MCF 10A (cell line): ENCODE measurements at regions of chr5 and their contacts with region 1.

Region 1: DNA sequence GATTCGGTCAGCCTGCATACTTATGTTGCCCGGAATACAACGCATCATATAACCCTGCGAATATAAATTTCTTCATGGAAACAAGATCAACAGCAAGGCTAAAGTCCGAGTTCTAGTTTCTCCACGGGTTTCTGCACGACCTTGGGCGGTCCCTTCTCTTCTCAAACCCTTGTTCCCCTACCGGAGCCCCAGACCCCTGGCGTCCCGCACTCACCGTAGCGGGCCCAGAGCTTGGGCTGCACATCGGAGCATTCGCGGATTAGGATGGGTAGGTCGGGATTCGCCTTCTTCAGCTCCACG is 438 bp downstream of the NDUFA2 start:
- DNase-seq: no peak
- H3K4me3 Mint-ChIP-seq: peak overlapping the region; percentile 86
- H3K27ac Mint-ChIP-seq: peak overlapping the region; percentile 93
- H3K4me1 Mint-ChIP-seq: peaks cover 18% of the 10 kb centered on the region
- H3K27me3 Mint-ChIP-seq: no peaks in the 10 kb centered on the region
- CTCF ChIP-seq: no peak

Region 2: GRCh38 chr5:140401362-140402257 is 245.4 kb before region 1 on chr5 and contains the start of gene ANKHD1:
- CTCF ChIA-PET with region 1: no interaction called
- POLR2A ChIA-PET with region 1: interaction called, 46 read pairs
- intact Hi-C with region 1: no loop called
- DNase-seq: peak; percentile 100
- H3K4me3 Mint-ChIP-seq: no peak within 1 kb of the TSS
- H3K27ac Mint-ChIP-seq: no peak within 1 kb of the TSS
- H3K4me1 Mint-ChIP-seq: peaks cover 19% of the 10 kb centered on the region
- H3K27me3 Mint-ChIP-seq: no peaks in the 10 kb centered on the region
- CTCF ChIP-seq: no peak
- total RNA-seq, gene ANKHD1: 142 and 146 TPM in 2 replicates

Region 3: GRCh38 chr5:140564196-140565023 is 82.6 kb before region 1 on chr5 and contains the starts of genes APBB3 and SLC35A4:
- CTCF ChIA-PET with region 1: interaction called, 4 read pairs
- POLR2A ChIA-PET with region 1: interaction called, 169 read pairs
- intact Hi-C with region 1: no loop called
- DNase-seq: peak; percentile 99
- H3K4me3 Mint-ChIP-seq: peak within 1 kb of the TSS; percentile 84
- H3K27ac Mint-ChIP-seq: peak within 1 kb of the TSS; percentile 95
- H3K4me1 Mint-ChIP-seq: peaks cover 22% of the 10 kb centered on the region
- H3K27me3 Mint-ChIP-seq: no peaks in the 10 kb centered on the region
- CTCF ChIP-seq: no peak
- total RNA-seq, gene APBB3: 22.7 and 28.1 TPM in 2 replicates
- total RNA-seq, gene SLC35A4: 84.0 and 119 TPM in 2 replicates

Region 4: GRCh38 chr5:140609126-140609525 is 37.9 kb before region 1 on chr5:
- CTCF ChIA-PET with region 1: no interaction called
- POLR2A ChIA-PET with region 1: interaction called, 13 read pairs
- intact Hi-C with region 1: no loop called
- DNase-seq: peak; percentile 77
- H3K4me3 Mint-ChIP-seq: no peak overlapping the region
- H3K27ac Mint-ChIP-seq: peak overlapping the region; percentile 32
- H3K4me1 Mint-ChIP-seq: peaks cover 29% of the 10 kb centered on the region
- H3K27me3 Mint-ChIP-seq: no peaks in the 10 kb centered on the region
- CTCF ChIP-seq: no peak

Region 5: GRCh38 chr5:140664359-140665119 is 17.5 kb after region 1 on chr5 and contains the start of gene WDR55:
- CTCF ChIA-PET with region 1: interaction called, 3 read pairs
- POLR2A ChIA-PET with region 1: interaction called, 164 read pairs
- intact Hi-C with region 1: no loop called
- DNase-seq: peak; percentile 98
- H3K4me3 Mint-ChIP-seq: peak within 1 kb of the TSS; percentile 100
- H3K27ac Mint-ChIP-seq: peak within 1 kb of the TSS; percentile 98
- H3K4me1 Mint-ChIP-seq: peaks cover 32% of the 10 kb centered on the region
- H3K27me3 Mint-ChIP-seq: no peaks in the 10 kb centered on the region
- CTCF ChIP-seq: no peak
- total RNA-seq, gene WDR55: 35.0 and 36.4 TPM in 2 replicates

Region 6: GRCh38 chr5:140710899-140711552 is 64.0 kb after region 1 on chr5:
- CTCF ChIA-PET with region 1: no interaction called
- POLR2A ChIA-PET with region 1: interaction called, 34 read pairs
- intact Hi-C with region 1: loop called (anchors 5 kb)
- DNase-seq: peak; percentile 99
- H3K4me3 Mint-ChIP-seq: peak overlapping the region; percentile 88
- H3K27ac Mint-ChIP-seq: peak overlapping the region; percentile 94
- H3K4me1 Mint-ChIP-seq: peaks cover 5% of the 10 kb centered on the region
- H3K27me3 Mint-ChIP-seq: no peaks in the 10 kb centered on the region
- CTCF ChIP-seq: no peak

Region 7: GRCh38 chr5:140996060-140996459 is 349.1 kb after region 1 on chr5:
- CTCF ChIA-PET with region 1: no interaction called
- POLR2A ChIA-PET with region 1: no interaction called
- intact Hi-C with region 1: no loop called
- DNase-seq: peak; percentile 75
- H3K4me3 Mint-ChIP-seq: no peak overlapping the region
- H3K27ac Mint-ChIP-seq: peak overlapping the region; percentile 68
- H3K4me1 Mint-ChIP-seq: peaks cover 17% of the 10 kb centered on the region
- H3K27me3 Mint-ChIP-seq: no peaks in the 10 kb centered on the region
- CTCF ChIP-seq: no peak